Naive thymus-derived CD4-positive, alpha-beta T cell (primary cell): ENCODE measurements at regions of chr6 and their contacts with region 1.

Region 1: DNA sequence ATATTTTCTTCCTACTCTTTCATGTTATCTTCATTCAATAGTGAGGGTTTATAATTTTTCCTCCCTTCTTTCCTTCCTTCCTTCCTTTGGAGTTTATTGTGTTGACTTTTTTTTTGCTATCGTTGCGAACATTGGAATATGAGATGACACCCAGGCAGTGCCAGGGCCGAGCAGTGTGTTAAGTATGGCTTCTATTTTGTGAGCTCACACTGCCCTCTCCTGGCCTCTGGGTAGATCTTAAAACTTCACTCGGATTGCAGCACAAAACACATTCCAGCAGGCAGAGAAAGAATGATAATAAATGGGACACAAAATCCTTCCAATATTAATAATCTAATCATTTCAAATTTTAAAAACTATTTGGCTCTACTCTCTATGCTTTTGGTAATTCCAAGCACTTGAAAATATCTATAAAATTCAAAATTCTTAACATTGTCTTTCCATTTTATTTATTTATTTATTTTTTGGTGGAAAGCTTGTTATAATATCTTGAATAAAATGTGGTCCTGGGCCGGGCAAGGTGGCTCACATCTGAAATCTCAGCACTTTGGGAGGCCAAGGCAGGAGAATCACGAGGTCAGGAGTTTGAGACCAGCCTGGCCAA is 147.4 kb upstream of the OLIG3 start:
- DNase-seq: peak; percentile 25 to 65 (median 57)
- ATAC-seq: peak; percentile 89
- H3K4me3 ChIP-seq: no peak overlapping the region
- H3K4me3 Mint-ChIP-seq: no peak overlapping the region
- H3K27ac ChIP-seq: no peak overlapping the region
- H3K27ac Mint-ChIP-seq: no peak overlapping the region
- H3K4me1 ChIP-seq: no peaks in the 10 kb centered on the region
- H3K4me1 Mint-ChIP-seq: peaks cover 0 to 17% (median 12%) of the 10 kb centered on the region in 7 donors
- H3K27me3 ChIP-seq: no peaks in the 10 kb centered on the region
- H3K27me3 Mint-ChIP-seq: peaks cover 0 to 13% (median 6%) of the 10 kb centered on the region in 5 donors

Region 2: GRCh38 chr6:136607932-136608772 is 1033.4 kb before region 1 on chr6:
- CTCF ChIA-PET with region 1: no interaction called
- POLR2A ChIA-PET with region 1: no interaction called
- intact Hi-C with region 1: loop called in 1 of 2 experiments (anchors 10 kb)
- DNase-seq: peak; percentile 47 to 77 (median 69)
- ATAC-seq: peak; percentile 90
- H3K4me3 ChIP-seq: no peak overlapping the region
- H3K4me3 Mint-ChIP-seq: no peak overlapping the region
- H3K27ac ChIP-seq: no peak overlapping the region
- H3K27ac Mint-ChIP-seq: peak overlapping the region in 3 of 9 donors; percentile 11 to 53 (median 46)
- H3K4me1 ChIP-seq: no peaks in the 10 kb centered on the region
- H3K4me1 Mint-ChIP-seq: peaks cover 0 to 23% (median 5%) of the 10 kb centered on the region in 7 donors
- H3K27me3 ChIP-seq: no peaks in the 10 kb centered on the region
- H3K27me3 Mint-ChIP-seq: no peaks in the 10 kb centered on the region

Region 3: DNA sequence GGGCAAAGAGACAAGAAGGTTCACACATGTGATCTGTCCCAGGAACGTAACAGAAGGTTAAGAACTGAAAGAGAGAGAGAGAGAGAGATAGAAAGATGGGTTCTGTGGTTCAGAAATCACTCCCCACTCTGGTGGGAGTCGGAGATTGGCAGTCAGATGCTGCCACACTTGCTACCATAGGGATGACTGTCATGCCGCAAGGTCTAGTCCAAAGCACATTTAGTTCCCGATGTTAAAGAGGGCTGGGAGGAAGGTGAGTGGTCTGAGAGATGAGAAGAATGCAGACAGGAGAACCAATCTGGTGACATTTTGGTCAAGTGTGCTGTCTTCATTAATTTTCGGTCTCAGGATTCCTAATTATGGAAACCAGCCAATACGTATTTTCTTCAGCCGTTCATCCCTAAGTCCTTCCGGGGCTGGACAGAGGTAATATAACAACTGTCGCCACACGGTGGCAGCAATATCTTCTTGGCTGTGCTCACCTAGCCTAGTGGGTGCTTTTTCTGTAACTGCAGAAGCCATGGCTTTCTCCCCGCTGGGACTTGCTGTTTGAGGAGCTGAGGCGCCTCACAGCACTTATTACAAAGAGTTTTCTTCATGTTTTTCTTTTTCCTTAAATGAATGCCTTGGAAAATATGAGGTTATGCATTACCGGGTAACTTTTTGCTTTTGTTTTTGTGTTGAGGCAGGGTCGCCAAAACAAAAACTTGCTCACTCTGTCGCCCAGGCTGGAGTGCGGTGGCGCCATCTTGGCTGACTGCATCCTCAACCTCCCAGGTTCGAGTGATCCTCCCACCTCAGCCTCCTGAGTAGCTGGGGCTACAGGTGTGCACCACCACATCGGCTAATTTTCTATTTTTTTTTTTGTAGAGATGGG is 673.5 kb before region 1 on chr6:
- CTCF ChIA-PET with region 1: interaction called, 4 read pairs
- POLR2A ChIA-PET with region 1: no interaction called
- intact Hi-C with region 1: loop called (anchors 1 to 2 kb)
- DNase-seq: peak in 8 of 9 donors; percentile 7 to 48 (median 30)
- ATAC-seq: peak; percentile 87
- H3K4me3 ChIP-seq: no peak overlapping the region
- H3K4me3 Mint-ChIP-seq: no peak overlapping the region
- H3K27ac ChIP-seq: no peak overlapping the region
- H3K27ac Mint-ChIP-seq: no peak overlapping the region
- H3K4me1 ChIP-seq: no peaks in the 10 kb centered on the region
- H3K4me1 Mint-ChIP-seq: peaks cover 0 to 9% (median 0%) of the 10 kb centered on the region in 7 donors
- H3K27me3 ChIP-seq: no peaks in the 10 kb centered on the region
- H3K27me3 Mint-ChIP-seq: peaks cover 29 to 59% (median 47%) of the 10 kb centered on the region in 5 donors

Region 4: DNA sequence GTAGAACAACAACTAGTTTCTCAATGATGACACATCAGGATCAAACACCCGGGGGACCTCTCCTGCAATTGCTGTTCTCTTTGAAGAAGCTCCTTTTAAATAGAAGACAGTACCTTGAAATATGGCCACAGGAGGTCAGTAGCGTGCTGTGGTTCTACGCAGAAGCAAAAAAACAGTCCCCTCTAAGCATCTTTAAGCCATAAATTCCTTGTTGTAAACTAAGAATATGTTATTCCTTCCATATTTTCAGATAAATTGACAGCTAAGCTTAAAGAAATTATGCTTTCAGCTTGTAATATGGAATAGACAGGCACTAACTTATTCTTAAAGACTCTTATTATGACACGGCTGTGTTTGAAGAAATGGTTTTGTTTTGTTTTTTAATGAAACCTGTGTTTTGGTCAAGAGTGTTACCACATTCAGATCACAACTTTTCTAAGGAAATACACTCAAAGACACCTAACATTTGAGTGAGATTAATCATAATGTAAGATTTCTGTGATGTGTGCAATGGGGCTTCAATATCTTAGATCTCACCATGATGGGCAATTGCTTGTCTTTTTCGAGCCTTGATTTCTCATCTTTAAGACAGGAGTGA is 547.1 kb before region 1 on chr6:
- CTCF ChIA-PET with region 1: interaction called, 3 read pairs
- POLR2A ChIA-PET with region 1: no interaction called
- intact Hi-C with region 1: loop called (anchors 1 kb)
- DNase-seq: peak in 8 of 9 donors; percentile 17 to 56 (median 40)
- ATAC-seq: peak; percentile 80
- H3K4me3 ChIP-seq: no peak overlapping the region
- H3K4me3 Mint-ChIP-seq: peak overlapping the region in 1 of 10 donors; percentile 33
- H3K27ac ChIP-seq: no peak overlapping the region
- H3K27ac Mint-ChIP-seq: peak overlapping the region in 1 of 9 donors; percentile 11
- H3K4me1 ChIP-seq: peaks cover 0 to 3% of the 10 kb centered on the region in 2 donors
- H3K4me1 Mint-ChIP-seq: peaks cover 0 to 44% (median 0%) of the 10 kb centered on the region in 7 donors
- H3K27me3 ChIP-seq: no peaks in the 10 kb centered on the region
- H3K27me3 Mint-ChIP-seq: peaks cover 0 to 10% (median 0%) of the 10 kb centered on the region in 5 donors

Region 5: GRCh38 chr6:137341681-137342195 is 299.8 kb before region 1 on chr6:
- CTCF ChIA-PET with region 1: interaction called, 8 read pairs
- POLR2A ChIA-PET with region 1: no interaction called
- intact Hi-C with region 1: loop called (anchors 1 kb)
- DNase-seq: peak in 8 of 9 donors; percentile 16 to 62 (median 48)
- ATAC-seq: peak; percentile 80
- H3K4me3 ChIP-seq: peak overlapping the region; percentile 24
- H3K4me3 Mint-ChIP-seq: peak overlapping the region in 9 of 10 donors; percentile 52 to 87 (median 77)
- H3K27ac ChIP-seq: no peak overlapping the region
- H3K27ac Mint-ChIP-seq: peak overlapping the region in 1 of 9 donors; percentile 76
- H3K4me1 ChIP-seq: peaks cover 5 to 10% of the 10 kb centered on the region in 2 donors
- H3K4me1 Mint-ChIP-seq: peaks cover 6 to 19% (median 17%) of the 10 kb centered on the region in 7 donors
- H3K27me3 ChIP-seq: no peaks in the 10 kb centered on the region
- H3K27me3 Mint-ChIP-seq: peaks cover 0 to 55% (median 0%) of the 10 kb centered on the region in 5 donors

Region 6: GRCh38 chr6:137589067-137589848 is 52.3 kb before region 1 on chr6:
- CTCF ChIA-PET with region 1: no interaction called
- POLR2A ChIA-PET with region 1: no interaction called
- intact Hi-C with region 1: loop called in 1 of 2 experiments (anchors 2 kb)
- DNase-seq: peak in 7 of 9 donors; percentile 33 to 73 (median 60)
- ATAC-seq: peak; percentile 99
- H3K4me3 ChIP-seq: no peak overlapping the region
- H3K4me3 Mint-ChIP-seq: peak overlapping the region in 6 of 10 donors; percentile 5 to 52 (median 19)
- H3K27ac ChIP-seq: no peak overlapping the region
- H3K27ac Mint-ChIP-seq: peak overlapping the region in 2 of 9 donors; percentile 13 to 39
- H3K4me1 ChIP-seq: peaks cover 0 to 6% of the 10 kb centered on the region in 2 donors
- H3K4me1 Mint-ChIP-seq: peaks cover 5 to 19% (median 9%) of the 10 kb centered on the region in 7 donors
- H3K27me3 ChIP-seq: no peaks in the 10 kb centered on the region
- H3K27me3 Mint-ChIP-seq: peaks cover 4 to 59% (median 5%) of the 10 kb centered on the region in 5 donors

Region 7: DNA sequence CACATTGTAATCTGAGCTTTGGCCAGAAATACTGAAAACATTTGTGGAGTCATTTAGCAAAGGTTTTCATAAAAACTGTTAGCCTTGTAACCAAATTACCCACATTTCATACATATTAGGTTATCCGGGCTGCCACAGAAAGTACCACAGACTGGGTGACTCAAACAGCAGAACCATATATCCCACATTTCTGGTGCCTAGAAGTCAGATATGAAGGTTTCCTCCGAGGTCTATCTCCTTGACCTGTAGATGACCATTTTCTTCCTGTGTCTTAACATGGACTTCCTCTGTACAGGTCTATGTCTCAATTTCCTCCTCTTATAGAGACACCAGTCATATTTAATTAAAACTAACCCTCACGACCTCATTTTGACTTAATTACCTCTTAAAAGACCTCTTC is 686.6 kb after region 1 on chr6:
- CTCF ChIA-PET with region 1: no interaction called
- POLR2A ChIA-PET with region 1: no interaction called
- intact Hi-C with region 1: no loop called
- DNase-seq: no peak
- ATAC-seq: no peak
- H3K4me3 ChIP-seq: no peak overlapping the region
- H3K4me3 Mint-ChIP-seq: no peak overlapping the region
- H3K27ac ChIP-seq: no peak overlapping the region
- H3K27ac Mint-ChIP-seq: no peak overlapping the region
- H3K4me1 ChIP-seq: no peaks in the 10 kb centered on the region
- H3K4me1 Mint-ChIP-seq: no peaks in the 10 kb centered on the region
- H3K27me3 ChIP-seq: no peaks in the 10 kb centered on the region
- H3K27me3 Mint-ChIP-seq: peaks cover 0 to 15% (median 7%) of the 10 kb centered on the region in 5 donors